Naive thymus-derived CD4-positive, alpha-beta T cell (primary cell): ENCODE measurements at regions of chr13 and their contacts with region 1.

Region 1: DNA sequence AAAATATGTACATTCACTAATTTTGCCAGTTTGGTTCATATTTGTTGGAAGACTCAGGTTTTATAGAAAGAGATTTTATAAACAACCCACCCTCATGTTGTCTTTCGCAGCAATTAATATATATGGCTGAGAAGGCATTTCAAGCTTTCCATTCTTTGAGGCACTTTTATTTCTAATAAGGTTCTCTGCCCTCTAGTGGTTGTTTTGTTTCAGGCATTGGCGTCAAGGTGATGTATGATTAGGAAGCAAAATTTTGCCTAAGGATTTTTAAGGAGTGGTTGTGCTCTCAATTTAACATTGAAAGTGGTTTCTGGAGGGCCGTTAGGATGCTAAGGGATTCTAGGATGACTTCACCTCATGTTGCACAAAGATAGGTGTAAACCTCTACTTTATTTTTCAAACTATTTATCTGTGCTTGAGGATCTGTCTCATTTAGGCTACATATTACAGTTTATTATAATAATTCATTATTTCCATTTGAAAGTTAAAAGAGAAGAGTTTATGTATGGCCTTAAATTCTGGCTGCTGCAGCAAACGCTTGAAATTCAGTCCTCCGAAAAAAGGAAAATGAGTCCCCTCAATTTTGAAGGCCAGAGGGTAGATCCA is 35.9 kb downstream of the OXGR1 start:
- DNase-seq: no peak
- ATAC-seq: no peak
- H3K4me3 ChIP-seq: no peak overlapping the region
- H3K4me3 Mint-ChIP-seq: no peak overlapping the region
- H3K27ac ChIP-seq: no peak overlapping the region
- H3K27ac Mint-ChIP-seq: no peak overlapping the region
- H3K4me1 ChIP-seq: no peaks in the 10 kb centered on the region
- H3K4me1 Mint-ChIP-seq: no peaks in the 10 kb centered on the region
- H3K27me3 ChIP-seq: no peaks in the 10 kb centered on the region
- H3K27me3 Mint-ChIP-seq: peaks cover 0 to 14% (median 3%) of the 10 kb centered on the region in 5 donors

Region 2: DNA sequence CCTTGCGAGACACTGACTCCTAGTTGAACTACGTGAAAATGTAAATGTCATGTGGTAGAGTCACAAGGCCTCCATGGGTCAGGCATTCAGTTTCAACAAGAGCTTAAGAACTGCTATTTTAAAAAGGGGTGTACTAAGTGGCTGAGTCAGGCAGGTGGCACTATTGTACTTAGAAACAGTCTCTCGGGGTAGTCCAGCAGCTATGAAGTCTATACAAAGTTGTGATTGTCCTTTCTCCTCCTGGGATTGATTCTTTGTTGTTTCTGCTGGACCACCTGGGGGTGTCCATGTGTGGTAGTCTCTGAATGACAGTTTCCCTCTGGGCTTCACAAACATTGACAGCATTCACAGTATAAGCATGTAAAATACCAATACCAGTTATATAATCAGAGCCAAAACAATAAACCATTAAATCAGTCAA is 938.2 kb before region 1 on chr13:
- CTCF ChIA-PET with region 1: no interaction called
- POLR2A ChIA-PET with region 1: no interaction called
- intact Hi-C with region 1: loop called in 1 of 2 experiments (anchors 2 kb)
- DNase-seq: no peak
- ATAC-seq: peak; percentile 32
- H3K4me3 ChIP-seq: no peak overlapping the region
- H3K4me3 Mint-ChIP-seq: no peak overlapping the region
- H3K27ac ChIP-seq: no peak overlapping the region
- H3K27ac Mint-ChIP-seq: no peak overlapping the region
- H3K4me1 ChIP-seq: no peaks in the 10 kb centered on the region
- H3K4me1 Mint-ChIP-seq: no peaks in the 10 kb centered on the region
- H3K27me3 ChIP-seq: no peaks in the 10 kb centered on the region
- H3K27me3 Mint-ChIP-seq: no peaks in the 10 kb centered on the region

Region 3: DNA sequence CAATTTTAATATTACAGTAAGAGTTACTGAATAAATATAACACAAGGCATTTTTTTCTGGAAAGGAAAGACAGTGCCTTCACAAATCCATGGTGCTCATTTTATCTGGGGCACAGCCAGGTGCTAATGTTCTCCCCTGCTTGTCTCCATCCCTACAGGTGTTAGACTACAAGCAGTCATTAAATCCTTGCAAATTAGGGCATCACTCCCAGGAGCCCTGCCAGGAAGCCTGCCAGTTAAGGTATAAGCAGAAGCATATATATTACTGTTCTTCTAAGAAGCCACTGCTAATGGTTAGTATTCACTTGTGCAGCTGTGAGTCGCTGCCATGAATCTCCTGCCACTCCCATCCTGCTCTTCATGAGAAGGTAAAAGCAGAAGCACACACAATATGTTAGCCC is 113.8 kb before region 1 on chr13:
- CTCF ChIA-PET with region 1: no interaction called
- POLR2A ChIA-PET with region 1: no interaction called
- intact Hi-C with region 1: no loop called
- DNase-seq: no peak
- ATAC-seq: no peak
- H3K4me3 ChIP-seq: no peak overlapping the region
- H3K4me3 Mint-ChIP-seq: no peak overlapping the region
- H3K27ac ChIP-seq: no peak overlapping the region
- H3K27ac Mint-ChIP-seq: no peak overlapping the region
- H3K4me1 ChIP-seq: no peaks in the 10 kb centered on the region
- H3K4me1 Mint-ChIP-seq: no peaks in the 10 kb centered on the region
- H3K27me3 ChIP-seq: no peaks in the 10 kb centered on the region
- H3K27me3 Mint-ChIP-seq: peaks cover 0 to 5% (median 0%) of the 10 kb centered on the region in 5 donors